ENCODE measurements at regions of chr7 and their contacts with region 1.

Region 1: GRCh38 chr7:156735851-156736250 is 95.3 kb downstream of the RNF32 start:
- DNase-seq: no peak
- H3K4me3 ChIP-seq: no peak overlapping the region
- H3K27ac ChIP-seq: no peak overlapping the region
- H3K4me1 ChIP-seq: no peaks in the 10 kb centered on the region
- CTCF ChIP-seq: no peak

Region 2: GRCh38 chr7:155398944-155399343 is 1336.9 kb before region 1 on chr7:
- CTCF ChIA-PET with region 1: no interaction called
- POLR2A ChIA-PET with region 1: no interaction called
- intact Hi-C with region 1: no loop called
- DNase-seq: no peak
- H3K4me3 ChIP-seq: no peak overlapping the region
- H3K27ac ChIP-seq: no peak overlapping the region
- H3K4me1 ChIP-seq: no peaks in the 10 kb centered on the region
- CTCF ChIP-seq: peak; percentile 63

Region 3: GRCh38 chr7:156656598-156656997 is 79.3 kb before region 1 on chr7:
- CTCF ChIA-PET with region 1: no interaction called
- POLR2A ChIA-PET with region 1: no interaction called
- intact Hi-C with region 1: no loop called
- DNase-seq: no peak
- H3K4me3 ChIP-seq: no peak overlapping the region
- H3K27ac ChIP-seq: no peak overlapping the region
- H3K4me1 ChIP-seq: no peaks in the 10 kb centered on the region
- CTCF ChIP-seq: no peak

Region 4: DNA sequence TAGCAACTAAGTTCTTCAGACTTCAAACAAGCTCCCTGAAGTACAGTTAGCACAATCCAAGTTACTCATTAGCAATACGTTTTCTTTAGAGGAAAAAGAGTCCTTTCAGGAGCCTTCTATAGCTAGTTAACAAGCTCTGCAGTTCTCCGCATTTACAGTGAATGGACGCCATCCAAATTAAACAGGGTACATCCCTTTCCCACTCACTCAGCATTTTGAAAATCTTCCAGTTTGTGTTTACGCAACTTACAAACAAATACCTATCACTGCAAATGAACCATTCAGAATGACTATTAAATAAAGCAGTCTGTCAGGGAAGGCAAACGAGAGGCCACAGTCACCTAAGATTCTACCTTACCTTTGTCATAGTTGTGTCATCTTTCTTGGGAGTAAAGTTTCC is 10.8 kb before region 1 on chr7:
- CTCF ChIA-PET with region 1: no interaction called
- POLR2A ChIA-PET with region 1: interaction called, 11 read pairs
- intact Hi-C with region 1: no loop called
- DNase-seq: no peak
- H3K4me3 ChIP-seq: no peak overlapping the region
- H3K27ac ChIP-seq: no peak overlapping the region
- H3K4me1 ChIP-seq: no peaks in the 10 kb centered on the region
- CTCF ChIP-seq: no peak

Region 5: GRCh38 chr7:156903232-156903909 is 167.5 kb after region 1 on chr7:
- CTCF ChIA-PET with region 1: no interaction called
- POLR2A ChIA-PET with region 1: no interaction called
- intact Hi-C with region 1: no loop called
- DNase-seq: no peak
- H3K4me3 ChIP-seq: no peak overlapping the region
- H3K27ac ChIP-seq: no peak overlapping the region
- H3K4me1 ChIP-seq: no peaks in the 10 kb centered on the region
- CTCF ChIP-seq: no peak

Region 6: DNA sequence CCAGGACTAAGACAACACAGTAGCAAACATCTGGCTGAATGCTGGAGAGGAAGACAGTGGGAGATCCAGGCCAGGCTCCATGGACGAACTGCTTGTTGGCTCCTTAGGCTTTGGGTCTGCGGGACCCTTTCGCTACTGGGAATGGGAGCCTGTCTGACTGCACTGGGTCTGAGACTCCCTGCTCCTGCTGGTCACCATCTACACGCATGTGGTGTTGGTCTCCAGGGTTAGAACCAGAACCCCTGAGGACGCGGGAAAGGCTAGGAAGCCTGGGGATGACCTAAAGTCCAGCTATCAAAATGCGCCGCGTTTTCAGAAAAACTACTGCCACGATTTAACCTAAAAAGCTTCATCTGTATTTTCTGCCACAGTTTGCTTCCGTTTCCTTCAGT is 600.1 kb after region 1 on chr7:
- CTCF ChIA-PET with region 1: no interaction called
- POLR2A ChIA-PET with region 1: no interaction called
- intact Hi-C with region 1: no loop called
- DNase-seq: no peak
- H3K4me3 ChIP-seq: peak overlapping the region; percentile 76
- H3K27ac ChIP-seq: peak overlapping the region; percentile 84
- H3K4me1 ChIP-seq: peaks cover 81% of the 10 kb centered on the region
- CTCF ChIP-seq: no peak